Astrocyte of the cerebellum (primary cell): ENCODE measurements at regions of chr6 and their contacts with region 1.

Region 1: DNA sequence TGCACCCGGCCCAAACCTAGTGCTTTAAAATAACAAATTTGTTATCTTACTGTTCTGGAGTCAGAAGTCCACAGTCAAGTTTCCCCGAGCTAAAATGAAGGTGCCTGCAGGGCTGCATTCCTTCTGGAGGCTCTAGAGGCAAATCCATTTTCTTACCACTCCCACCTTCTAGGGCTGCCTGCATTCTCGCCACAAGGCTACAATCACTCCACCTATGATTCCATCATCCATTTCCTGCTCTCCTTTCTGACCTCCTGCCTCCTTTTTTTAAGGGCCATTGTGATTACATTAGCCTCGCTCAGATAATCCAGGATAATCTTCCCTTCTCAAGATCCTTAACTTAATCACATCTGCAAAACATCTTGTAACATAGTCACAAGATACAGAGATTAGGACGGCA is 42.5 kb upstream of the SIRT5 start:
- DNase-seq: no peak
- H3K4me3 ChIP-seq: no peak overlapping the region
- CTCF ChIP-seq: no peak

Region 2: GRCh38 chr6:13354331-13355042 is 177.5 kb before region 1 on chr6:
- in situ Hi-C with region 1: loop called (anchors 5 kb)
- DNase-seq: no peak
- H3K4me3 ChIP-seq: no peak overlapping the region
- CTCF ChIP-seq: no peak

Region 3: GRCh38 chr6:13445005-13445743 is 86.8 kb before region 1 on chr6:
- in situ Hi-C with region 1: no loop called
- DNase-seq: no peak
- H3K4me3 ChIP-seq: no peak overlapping the region
- CTCF ChIP-seq: no peak